Dorsolateral prefrontal cortex (tissue), 120 donors: ENCODE measurements at regions of chr2 and their contacts with region 1.

Region 1: GRCh38 chr2:30711646-30712085 is 95.6 kb downstream of the CAPN13 start:
- DNase-seq: peak; percentile 42 to 90 (median 76)
- H3K4me3 ChIP-seq: no peak overlapping the region
- H3K27ac ChIP-seq: no peak overlapping the region
- H3K27me3 ChIP-seq: no peaks in the 10 kb centered on the region
- CTCF ChIP-seq: peak; percentile 74 to 100 (median 98)

Region 2: GRCh38 chr2:30165050-30165520 is 546.6 kb before region 1 on chr2:
- intact Hi-C with region 1: loop called (anchors 2 to 5 kb)
- DNase-seq: peak in 6 of 10 donors; percentile 26 to 73 (median 41)
- H3K4me3 ChIP-seq: no peak overlapping the region
- H3K27ac ChIP-seq: no peak overlapping the region
- H3K27me3 ChIP-seq: no peaks in the 10 kb centered on the region
- CTCF ChIP-seq: peak; percentile 88 to 97 (median 94)

Region 3: DNA sequence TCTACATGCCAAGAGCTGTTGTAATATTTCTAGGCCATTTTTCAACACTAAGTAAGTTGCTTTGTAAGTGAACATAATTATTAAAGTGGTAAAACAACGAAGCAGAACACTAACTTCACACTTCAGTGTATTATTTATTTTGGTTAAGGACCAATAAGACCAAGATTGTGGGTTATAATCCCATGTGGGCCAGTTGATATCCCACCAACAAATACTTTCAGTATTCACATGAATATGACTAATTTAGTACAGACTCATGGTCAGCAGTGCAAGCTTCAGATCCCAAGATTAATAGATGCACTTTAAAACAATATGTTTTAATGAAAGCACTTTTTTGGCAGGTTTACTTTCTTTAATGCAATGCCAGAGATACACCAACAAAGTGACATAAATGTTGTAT is 110.3 kb before region 1 on chr2:
- intact Hi-C with region 1: no loop called
- DNase-seq: no peak
- H3K4me3 ChIP-seq: no peak overlapping the region
- H3K27ac ChIP-seq: no peak overlapping the region
- H3K27me3 ChIP-seq: no peaks in the 10 kb centered on the region
- CTCF ChIP-seq: no peak

Region 4: GRCh38 chr2:30862054-30862651 is 150.5 kb after region 1 on chr2:
- intact Hi-C with region 1: loop called (anchors 1 to 2 kb)
- DNase-seq: peak in 7 of 10 donors; percentile 25 to 72 (median 55)
- H3K4me3 ChIP-seq: no peak overlapping the region
- H3K27ac ChIP-seq: peak overlapping the region in 26 of 59 donors; percentile 2 to 72 (median 30)
- H3K27me3 ChIP-seq: no peaks in the 10 kb centered on the region
- CTCF ChIP-seq: peak; percentile 55 to 94 (median 82)

Region 5: DNA sequence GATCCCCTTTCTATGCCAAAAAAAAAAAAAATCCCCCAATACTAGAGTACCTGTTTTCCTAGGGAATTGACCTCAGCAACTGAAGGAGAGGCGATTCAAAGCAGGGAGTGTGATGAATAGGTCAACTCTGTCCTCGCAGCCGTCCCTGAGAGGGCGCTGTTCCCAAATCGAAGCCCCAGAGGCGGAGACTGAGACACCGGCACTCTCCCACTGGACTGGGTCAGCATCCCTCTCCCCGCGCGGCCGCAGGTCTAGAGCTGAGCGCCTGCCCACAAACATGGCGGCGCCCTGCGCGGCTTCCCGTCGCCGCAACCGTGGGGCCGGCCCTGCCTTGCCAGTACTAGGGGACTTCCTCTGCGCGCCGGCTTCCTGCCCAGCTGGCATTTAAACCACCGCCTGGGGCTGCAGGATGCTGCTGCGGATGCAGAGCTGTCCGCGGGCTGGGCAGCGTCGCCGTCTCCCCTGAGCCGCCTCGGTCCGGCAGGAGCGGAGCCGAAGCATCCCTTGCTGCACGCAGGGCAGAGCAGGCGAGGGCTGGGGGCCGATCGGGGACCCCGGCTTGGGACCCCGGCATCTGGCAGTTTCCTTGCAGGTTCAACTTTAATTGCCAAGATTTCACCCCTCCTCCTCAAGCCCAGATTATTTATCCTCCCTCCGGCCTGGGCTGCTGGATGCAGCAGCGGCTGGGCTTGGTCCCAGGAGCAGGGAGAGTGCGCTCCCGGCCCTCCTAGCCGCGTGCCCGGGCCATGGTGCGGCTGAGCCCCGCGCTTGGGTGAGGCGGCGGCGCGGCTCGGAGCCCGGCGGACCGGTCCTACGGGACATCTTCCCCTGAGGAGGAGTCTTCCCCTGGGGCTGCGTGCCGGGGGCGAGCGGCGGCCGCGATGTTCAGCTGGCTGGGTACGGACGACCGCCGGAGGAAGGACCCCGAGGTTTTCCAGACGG is 522.3 kb after region 1 on chr2 and contains the start of gene EHD3:
- intact Hi-C with region 1: loop called in 1 of 2 experiments (anchors 10 kb)
- DNase-seq: peak; percentile 82 to 97 (median 92)
- H3K4me3 ChIP-seq: peak within 1 kb of the TSS; percentile 58 to 92 (median 80)
- H3K27ac ChIP-seq: peak within 1 kb of the TSS; percentile 18 to 94 (median 86)
- H3K27me3 ChIP-seq: no peaks in the 10 kb centered on the region
- CTCF ChIP-seq: peak; percentile 52 to 92 (median 76)
- total RNA-seq, gene EHD3: 35.8 to 122 (median 93.2) TPM

Region 6: GRCh38 chr2:31328026-31328425 is 616.4 kb after region 1 on chr2:
- intact Hi-C with region 1: loop called in 1 of 2 experiments (anchors 5 kb)
- DNase-seq: no peak
- H3K4me3 ChIP-seq: no peak overlapping the region
- H3K27ac ChIP-seq: no peak overlapping the region
- H3K27me3 ChIP-seq: peaks cover 0 to 6% (median 0%) of the 10 kb centered on the region in 45 donors
- CTCF ChIP-seq: no peak